ENCODE measurements at regions of chr1 and their contacts with region 1.

Region 1: DNA sequence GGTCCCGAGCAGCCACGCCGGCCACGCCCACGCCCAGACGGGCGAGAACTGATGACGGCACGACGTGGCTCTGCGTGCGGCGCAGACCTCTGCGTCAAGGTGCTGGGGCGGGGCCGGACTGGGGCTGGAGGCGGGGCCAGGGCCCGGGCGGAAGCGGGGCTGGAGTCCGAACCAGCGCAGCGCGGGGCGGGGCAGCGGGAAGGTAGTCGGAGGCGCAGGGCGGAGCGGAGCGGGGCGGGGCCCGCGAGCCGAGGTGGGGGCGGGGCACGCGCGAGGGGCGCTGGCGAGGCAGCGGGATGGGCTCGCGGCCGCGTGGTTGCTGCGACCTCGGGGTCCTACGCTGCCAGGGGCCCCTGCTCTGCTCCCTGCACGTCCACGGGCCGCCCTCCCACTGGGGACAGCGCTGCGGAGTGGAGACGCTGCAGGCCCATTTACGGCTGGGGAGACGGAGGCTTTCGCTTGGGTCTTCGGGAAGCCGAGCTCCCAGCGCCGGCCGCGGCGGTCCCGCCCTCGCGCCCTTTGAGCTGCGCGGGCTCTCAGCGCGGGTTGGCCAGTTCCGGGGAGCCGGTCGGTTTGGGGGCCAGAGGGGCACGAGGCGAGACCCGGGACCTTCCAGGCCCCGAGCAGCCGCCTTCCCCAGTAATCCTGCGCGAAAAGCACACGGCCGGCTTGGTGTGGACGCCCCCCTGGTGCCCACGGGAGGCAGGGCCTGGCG is at the start of gene PEX10:
- DNase-seq: peak; percentile 99

Region 2: GRCh38 chr1:2391041-2391930 is 21.4 kb before region 1 on chr1 and contains the starts of genes MORN1 and RER1:
- CTCF ChIA-PET with region 1: no interaction called
- POLR2A ChIA-PET with region 1: interaction called, 18 read pairs
- DNase-seq: peak; percentile 99

Region 3: DNA sequence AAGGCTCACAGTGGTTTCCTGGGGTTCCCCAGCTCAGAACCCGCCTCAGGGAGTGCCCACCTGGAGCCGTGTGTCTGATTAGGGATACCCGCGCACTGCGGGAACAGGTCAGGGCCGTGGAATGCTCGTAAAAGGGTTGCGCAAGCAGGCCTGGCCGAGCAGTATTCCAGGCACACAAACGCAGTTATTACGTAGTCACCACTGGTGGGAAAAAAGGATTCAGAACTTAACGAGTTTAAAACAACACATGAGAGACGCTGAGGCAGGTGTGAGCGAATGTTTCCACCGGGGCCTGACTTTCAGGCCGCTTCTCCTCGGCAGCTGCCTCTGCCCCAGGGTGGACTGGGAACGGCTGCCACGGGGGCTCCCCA is 81.6 kb after region 1 on chr1:
- CTCF ChIA-PET with region 1: no interaction called
- POLR2A ChIA-PET with region 1: no interaction called
- DNase-seq: peak; percentile 37

Measured in HEK293T (cell line).